Cardiac septum (tissue), 1 donor: ENCODE measurements at regions of chr5 and their contacts with region 1.

Region 1: DNA sequence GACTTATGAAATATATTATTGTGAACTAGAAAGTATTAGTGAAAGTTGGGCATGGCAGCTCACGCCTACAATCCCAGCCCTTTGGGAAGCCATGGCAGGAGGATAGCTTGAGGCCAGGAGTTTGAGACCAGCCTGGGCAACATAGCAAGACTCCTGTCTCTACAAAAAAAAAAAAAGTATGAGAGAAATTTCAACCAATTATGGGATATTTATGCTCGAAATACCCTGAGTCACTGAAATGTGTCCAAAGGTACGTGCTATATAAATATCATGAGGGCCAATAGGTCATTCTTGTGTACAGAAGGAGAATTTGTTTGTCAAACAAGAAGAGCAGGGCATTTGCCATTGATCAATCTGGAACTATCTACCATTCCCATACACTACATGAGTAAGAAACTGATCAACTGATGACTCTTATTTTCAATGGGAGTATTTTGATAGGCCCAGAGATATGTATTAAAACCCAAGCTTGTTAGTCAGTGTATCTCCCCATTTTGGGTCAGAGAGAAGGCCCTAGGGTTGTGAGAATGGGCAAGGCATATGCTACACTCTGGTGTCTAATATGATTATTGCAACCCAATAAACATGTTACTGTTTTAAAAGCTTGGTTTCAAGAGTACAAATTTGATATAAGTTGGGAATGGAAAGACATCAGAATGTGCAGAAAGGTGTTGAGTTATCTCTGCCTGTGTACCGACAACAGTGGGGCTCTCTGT is 21.7 kb upstream of the HOMER1 start:
- DNase-seq: no peak

Region 2: GRCh38 chr5:79133657-79134451 is 401.8 kb before region 1 on chr5:
- intact Hi-C with region 1: loop called (anchors 10 kb)
- DNase-seq: no peak

Region 3: DNA sequence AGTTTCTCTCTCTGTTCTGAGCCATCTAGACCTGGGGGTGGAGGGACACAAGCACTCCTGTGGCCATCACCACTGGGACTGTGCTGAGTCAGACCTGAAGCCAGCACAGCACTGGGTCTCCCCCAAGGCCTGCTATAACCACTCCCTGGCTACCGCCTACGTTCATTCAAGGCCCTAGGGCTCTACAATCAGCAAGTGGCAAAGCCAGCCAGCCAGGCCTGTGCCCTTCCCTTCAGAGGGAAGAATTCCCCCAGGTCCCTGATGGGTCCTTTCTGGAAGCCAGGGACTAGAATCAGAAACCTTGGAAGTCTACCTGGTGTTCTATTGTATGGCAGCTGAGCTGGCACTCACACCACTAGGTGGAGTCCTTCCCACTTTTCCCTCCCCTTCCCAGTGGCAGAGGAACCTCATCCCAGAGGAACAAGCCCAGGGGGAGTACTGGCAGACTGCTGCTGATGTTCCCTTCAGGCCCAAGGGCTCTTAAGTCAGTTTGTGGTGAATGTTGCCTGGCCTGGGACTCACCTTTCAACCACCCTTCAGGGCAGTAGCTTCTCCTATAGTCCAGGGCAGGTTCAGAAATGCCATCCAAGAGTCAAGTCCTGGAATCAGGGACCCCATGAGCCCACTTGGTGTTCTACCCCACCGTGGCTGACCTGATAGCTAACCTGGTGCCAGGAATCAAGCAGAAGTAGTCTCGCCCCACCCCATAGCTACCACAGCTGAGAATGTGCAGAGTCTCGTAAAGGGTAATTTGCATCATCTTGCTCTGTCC is 279.7 kb before region 1 on chr5:
- intact Hi-C with region 1: loop called (anchors 10 kb)
- DNase-seq: no peak

Region 4: DNA sequence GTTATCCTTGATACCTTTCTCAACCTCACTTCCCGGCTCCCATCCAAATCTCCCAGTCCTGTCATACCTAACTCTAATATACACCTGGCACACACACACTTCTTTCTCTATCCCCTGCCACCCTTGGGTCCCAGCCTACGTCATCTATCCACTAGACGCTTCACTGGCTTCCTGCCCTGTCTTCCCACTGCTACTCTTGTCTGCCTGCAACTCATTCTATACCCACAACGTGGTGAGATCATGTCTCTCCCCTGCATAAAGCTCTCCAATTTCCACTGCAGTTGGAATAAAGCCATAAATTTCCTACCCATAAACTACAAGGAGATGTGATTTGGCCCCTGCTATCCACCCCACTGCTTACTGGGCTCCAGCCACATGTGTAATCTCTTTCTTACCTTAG is 206.2 kb before region 1 on chr5:
- intact Hi-C with region 1: loop called (anchors 10 kb)
- DNase-seq: no peak

Region 5: DNA sequence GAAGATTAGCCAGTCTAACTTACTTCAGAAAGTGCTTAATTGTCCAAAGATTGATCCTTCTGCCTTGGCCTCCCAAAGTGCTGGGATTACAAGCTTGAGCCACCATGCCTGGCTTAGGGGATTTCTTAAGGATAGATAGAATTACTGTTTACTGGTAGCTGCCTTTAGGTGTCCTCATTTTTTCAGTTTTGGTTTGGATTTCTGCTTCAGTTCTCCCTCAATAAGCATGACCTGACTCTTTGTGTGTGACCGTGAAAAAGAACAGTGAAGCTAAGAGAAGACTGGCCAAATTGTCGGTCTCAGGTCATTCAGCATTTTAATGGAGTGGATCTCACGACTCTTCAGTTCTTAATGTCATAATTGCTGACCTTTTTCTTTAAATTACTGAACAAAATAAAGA is 131.1 kb after region 1 on chr5:
- intact Hi-C with region 1: no loop called
- DNase-seq: no peak